Panc1 (cell line): ENCODE measurements at regions of chr3 and their contacts with region 1.

Region 1: GRCh38 chr3:45760878-45761711 is 35.2 kb downstream of the SLC6A20 start:
- DNase-seq: peak; percentile 56
- ATAC-seq: peak; percentile 94
- H3K4me3 ChIP-seq: peak overlapping the region in 1 of 2 experiments; percentile 16; a peak in 1 of 4 replicates
- H3K27ac ChIP-seq: no peak overlapping the region
- H3K4me1 ChIP-seq: no peaks in the 10 kb centered on the region
- H3K27me3 ChIP-seq: no peaks in the 10 kb centered on the region
- CTCF ChIP-seq: peak; percentile 87

Region 2: GRCh38 chr3:45437383-45437782 is 323.7 kb before region 1 on chr3:
- CTCF ChIA-PET with region 1: no interaction called
- POLR2A ChIA-PET with region 1: no interaction called
- in situ Hi-C with region 1: no loop called
- intact Hi-C with region 1: no loop called
- DNase-seq: no peak
- ATAC-seq: no peak
- H3K4me3 ChIP-seq: no peak overlapping the region
- H3K27ac ChIP-seq: no peak overlapping the region
- H3K4me1 ChIP-seq: no peaks in the 10 kb centered on the region
- H3K27me3 ChIP-seq: no peaks in the 10 kb centered on the region
- CTCF ChIP-seq: no peak; the same call in 1 of the 2 replicates

Region 3: GRCh38 chr3:45499529-45499928 is 261.6 kb before region 1 on chr3:
- CTCF ChIA-PET with region 1: no interaction called
- POLR2A ChIA-PET with region 1: no interaction called
- in situ Hi-C with region 1: no loop called
- intact Hi-C with region 1: no loop called
- DNase-seq: no peak
- ATAC-seq: no peak
- H3K4me3 ChIP-seq: no peak overlapping the region
- H3K27ac ChIP-seq: no peak overlapping the region
- H3K4me1 ChIP-seq: no peaks in the 10 kb centered on the region
- H3K27me3 ChIP-seq: no peaks in the 10 kb centered on the region
- CTCF ChIP-seq: peak; percentile 42; the same call in 1 of the 2 replicates

Region 4: DNA sequence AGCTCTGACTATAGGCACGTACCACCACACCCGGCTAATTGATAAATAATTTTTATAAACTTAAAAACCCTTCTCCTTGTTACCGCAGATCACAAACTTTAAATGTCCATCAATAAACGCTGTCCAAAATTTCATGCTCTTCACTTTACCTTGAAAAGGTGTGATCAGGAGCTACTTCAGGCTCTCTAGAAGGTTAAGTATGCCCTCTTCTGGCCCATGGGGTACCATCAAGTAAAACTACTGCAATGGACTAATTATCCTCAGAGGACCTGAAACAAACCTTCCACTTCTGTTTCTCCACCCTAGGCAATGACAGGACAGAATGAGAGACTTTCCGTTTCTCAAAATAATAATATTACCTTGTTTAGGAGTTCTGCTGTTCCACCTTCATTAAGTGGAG is 71.6 kb after region 1 on chr3:
- CTCF ChIA-PET with region 1: interaction called, 8 read pairs
- POLR2A ChIA-PET with region 1: no interaction called
- in situ Hi-C with region 1: no loop called
- intact Hi-C with region 1: loop called (anchors 1 kb)
- DNase-seq: no peak
- ATAC-seq: no peak; the same call in 1 of the 2 replicates
- H3K4me3 ChIP-seq: no peak overlapping the region
- H3K27ac ChIP-seq: no peak overlapping the region
- H3K4me1 ChIP-seq: no peaks in the 10 kb centered on the region
- H3K27me3 ChIP-seq: no peaks in the 10 kb centered on the region
- CTCF ChIP-seq: peak; percentile 45; the same call in 1 of the 2 replicates

Region 5: GRCh38 chr3:45943207-45943846 is 182.2 kb after region 1 on chr3 and contains the start of gene CXCR6:
- CTCF ChIA-PET with region 1: no interaction called
- POLR2A ChIA-PET with region 1: no interaction called
- in situ Hi-C with region 1: no loop called
- intact Hi-C with region 1: no loop called
- DNase-seq: no peak
- ATAC-seq: no peak
- H3K4me3 ChIP-seq: no peak within 1 kb of the TSS
- H3K27ac ChIP-seq: no peak within 1 kb of the TSS
- H3K4me1 ChIP-seq: no peaks in the 10 kb centered on the region
- H3K27me3 ChIP-seq: no peaks in the 10 kb centered on the region
- CTCF ChIP-seq: no peak
- total RNA-seq, gene CXCR6: not detected